ENCODE measurements at regions of chr6 and their contacts with region 1.

Region 1: DNA sequence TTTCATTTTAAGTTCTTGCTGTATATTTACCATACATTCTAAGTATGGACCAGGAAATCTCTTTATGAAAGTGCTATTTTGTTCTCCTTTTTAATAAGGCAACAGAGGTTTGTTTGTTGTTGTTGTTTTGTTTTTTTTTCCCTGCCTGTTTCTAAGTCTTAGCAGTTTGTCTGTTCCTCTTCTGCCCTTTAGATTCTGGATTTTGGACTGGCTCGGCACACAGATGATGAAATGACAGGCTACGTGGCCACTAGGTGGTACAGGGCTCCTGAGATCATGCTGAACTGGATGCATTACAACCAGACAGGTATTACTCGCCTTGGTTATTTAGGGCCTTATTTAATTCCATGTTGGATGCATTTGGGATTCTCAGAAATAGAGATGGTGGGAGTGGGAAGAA is 48.0 kb downstream of the MAPK14 start:
- DNase-seq: no peak
- H3K4me3 ChIP-seq: no peak overlapping the region
- H3K27ac ChIP-seq: no peak overlapping the region
- H3K4me1 ChIP-seq: no peaks in the 10 kb centered on the region
- H3K27me3 ChIP-seq: no peaks in the 10 kb centered on the region
- CTCF ChIP-seq: peak in 1 of 2 donors; percentile 19

Region 2: DNA sequence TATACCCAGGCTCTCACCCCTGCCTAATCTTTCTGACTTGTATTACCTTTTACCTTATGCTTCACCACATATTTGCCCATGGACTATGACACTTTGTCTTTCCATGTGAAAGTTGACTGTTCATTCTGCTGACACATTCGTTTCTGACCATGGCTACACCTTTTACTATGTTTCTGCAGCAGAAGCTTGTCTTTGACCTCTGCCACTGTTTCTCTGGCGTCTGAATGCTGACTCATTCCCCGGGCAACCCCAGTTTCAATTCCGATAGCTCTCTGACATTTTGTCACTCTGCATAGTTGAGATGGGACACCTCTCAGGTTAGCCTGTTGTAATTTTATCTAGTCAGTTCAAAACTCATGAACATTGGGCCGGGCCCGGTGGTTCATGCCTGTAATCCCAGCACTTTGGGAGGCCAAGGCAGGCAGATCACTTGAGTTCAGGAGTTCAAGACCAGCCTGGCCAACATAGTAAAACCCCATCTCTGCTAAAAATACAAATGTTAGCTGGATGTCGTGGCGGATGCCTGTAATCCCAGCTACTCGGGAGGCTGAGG is 101.9 kb before region 1 on chr6:
- CTCF ChIA-PET with region 1: interaction called, 25 read pairs
- dilution Hi-C with region 1: no loop called
- in situ Hi-C with region 1: no loop called
- intact Hi-C with region 1: no loop called
- DNase-seq: no peak
- H3K4me3 ChIP-seq: no peak overlapping the region
- H3K27ac ChIP-seq: no peak overlapping the region
- H3K4me1 ChIP-seq: peaks cover 3% of the 10 kb centered on the region
- H3K27me3 ChIP-seq: peaks cover 2% of the 10 kb centered on the region
- CTCF ChIP-seq: no peak

Region 3: DNA sequence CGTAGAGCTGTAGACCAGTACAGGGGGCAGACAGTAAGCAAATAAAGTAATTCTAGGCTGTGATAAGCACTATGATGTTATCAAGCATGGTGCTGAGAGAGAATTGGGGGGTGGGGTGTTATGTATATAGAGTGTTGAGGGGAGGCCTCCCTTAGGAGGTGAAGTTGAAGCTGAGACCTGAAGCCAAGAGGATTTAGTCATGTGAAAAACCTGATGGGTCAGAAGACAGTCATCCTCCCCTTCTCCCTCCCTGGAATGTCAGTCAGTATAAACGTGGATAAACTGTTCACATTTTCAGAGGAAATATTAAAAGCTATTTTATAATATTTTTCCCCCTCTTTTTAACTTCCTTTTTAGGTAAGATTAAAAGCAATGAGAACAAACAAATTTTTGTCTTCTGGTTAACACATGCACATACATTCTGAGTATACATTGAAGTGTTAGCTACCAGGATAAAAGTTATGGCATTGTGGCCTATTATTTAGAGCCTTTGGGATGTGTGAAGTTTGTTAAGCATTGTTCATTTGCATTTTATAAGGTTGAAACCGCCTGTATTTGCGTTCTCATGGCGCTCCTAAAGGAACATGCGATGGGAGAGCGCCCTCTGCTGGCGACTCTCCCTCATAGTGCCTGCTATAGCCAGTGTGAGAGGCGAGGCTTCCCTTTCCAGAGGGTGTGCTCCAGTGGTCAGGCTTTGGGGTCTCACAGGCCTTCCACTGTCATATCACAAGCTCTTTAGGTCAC is 19.3 kb after region 1 on chr6:
- CTCF ChIA-PET with region 1: no interaction called
- dilution Hi-C with region 1: no loop called
- in situ Hi-C with region 1: no loop called
- intact Hi-C with region 1: no loop called
- DNase-seq: peak; percentile 51
- H3K4me3 ChIP-seq: no peak overlapping the region
- H3K27ac ChIP-seq: no peak overlapping the region
- H3K4me1 ChIP-seq: peaks cover 2% of the 10 kb centered on the region
- H3K27me3 ChIP-seq: no peaks in the 10 kb centered on the region
- CTCF ChIP-seq: peak; percentile 93 to 96

Region 4: DNA sequence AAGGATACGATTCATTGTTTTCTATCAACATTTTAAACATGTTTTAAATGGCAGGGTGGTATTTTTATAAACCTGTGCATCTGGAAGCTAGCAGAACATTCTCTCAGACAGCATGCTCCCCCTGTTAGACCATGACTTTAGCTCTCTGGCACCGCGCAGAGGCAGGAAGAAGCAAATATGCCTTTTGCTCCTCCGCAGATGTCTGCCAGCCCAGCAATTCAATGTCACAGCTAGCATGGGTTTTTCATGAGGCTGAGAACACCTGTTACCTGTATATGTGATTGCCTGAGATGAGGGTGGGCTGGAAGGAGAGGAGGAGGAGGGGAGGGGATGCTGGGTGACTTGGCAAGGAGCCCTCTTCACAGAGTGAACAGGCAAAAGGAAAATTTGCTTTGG is 903.7 kb after region 1 on chr6:
- CTCF ChIA-PET with region 1: interaction called, 11 read pairs
- dilution Hi-C with region 1: no loop called
- in situ Hi-C with region 1: no loop called
- intact Hi-C with region 1: no loop called
- DNase-seq: no peak
- H3K4me3 ChIP-seq: no peak overlapping the region
- H3K27ac ChIP-seq: no peak overlapping the region
- H3K4me1 ChIP-seq: peaks cover 4% of the 10 kb centered on the region
- H3K27me3 ChIP-seq: no peaks in the 10 kb centered on the region
- CTCF ChIP-seq: peak in 1 of 2 donors; percentile 34

Measured in mammary epithelial cell (primary cell).